Activated CD4-positive, alpha-beta memory T cell treated with anti-CD3 and anti-CD28 coated beads for 36 hours (primary cell): ENCODE measurements at regions of chr10 and their contacts with region 1.

Region 1: DNA sequence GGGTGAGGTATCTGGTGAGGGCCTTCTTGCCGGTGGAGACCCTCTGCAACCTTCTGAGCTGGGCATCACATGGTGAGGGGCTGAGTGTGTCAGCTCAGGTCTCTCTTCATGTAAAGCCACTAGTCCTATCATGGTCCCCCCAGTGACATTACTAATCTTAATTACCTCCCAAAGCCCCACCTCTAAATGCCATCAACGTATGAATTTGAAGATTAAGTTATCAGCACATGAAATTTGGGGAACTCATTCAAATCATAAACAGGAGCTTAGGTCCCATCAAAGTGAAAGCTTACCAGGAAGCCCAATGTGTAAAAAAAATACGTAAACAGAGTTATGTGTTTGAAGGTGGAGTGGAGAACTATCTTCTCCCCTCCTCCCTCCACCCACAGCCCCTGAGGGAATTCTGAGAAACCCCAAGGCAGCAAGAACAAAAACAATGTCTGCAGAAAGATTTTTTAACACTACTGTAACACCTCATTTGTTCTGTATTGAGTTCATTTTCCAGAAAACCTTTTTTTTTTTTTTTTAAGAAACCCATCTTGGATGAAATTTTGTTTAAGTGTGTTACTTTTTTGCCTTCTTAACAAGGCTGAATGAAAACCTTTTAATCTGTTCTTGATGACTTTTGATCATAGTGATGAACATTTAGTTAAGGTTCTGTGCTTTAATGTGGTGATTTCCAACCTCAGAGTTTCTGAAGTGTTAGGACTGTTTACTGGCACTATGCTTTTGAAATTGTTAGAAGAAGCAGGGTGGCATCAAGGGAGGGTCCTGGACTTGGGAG is 19.1 kb upstream of the PCGF5 start:
- DNase-seq: peak; percentile 80
- H3K4me3 Mint-ChIP-seq: peak overlapping the region; percentile 49
- H3K27ac Mint-ChIP-seq: peak overlapping the region; percentile 86
- H3K4me1 Mint-ChIP-seq: peaks cover 87% of the 10 kb centered on the region
- H3K27me3 Mint-ChIP-seq: no peaks in the 10 kb centered on the region

Region 2: GRCh38 chr10:91163269-91163868 is 38.0 kb before region 1 on chr10:
- CTCF ChIA-PET with region 1: interaction called, 6 read pairs
- POLR2A ChIA-PET with region 1: interaction called, 13 read pairs
- intact Hi-C with region 1: loop called (anchors 1 kb)
- DNase-seq: peak; percentile 79
- H3K4me3 Mint-ChIP-seq: peak overlapping the region; percentile 82
- H3K27ac Mint-ChIP-seq: peak overlapping the region; percentile 87
- H3K4me1 Mint-ChIP-seq: peaks cover 47% of the 10 kb centered on the region
- H3K27me3 Mint-ChIP-seq: no peaks in the 10 kb centered on the region

Region 3: GRCh38 chr10:91190876-91191583 is 10.4 kb before region 1 on chr10:
- CTCF ChIA-PET with region 1: no interaction called
- POLR2A ChIA-PET with region 1: interaction called, 3 read pairs
- intact Hi-C with region 1: loop called (anchors 1 kb)
- DNase-seq: no peak
- H3K4me3 Mint-ChIP-seq: no peak overlapping the region
- H3K27ac Mint-ChIP-seq: no peak overlapping the region
- H3K4me1 Mint-ChIP-seq: peaks cover 74% of the 10 kb centered on the region
- H3K27me3 Mint-ChIP-seq: no peaks in the 10 kb centered on the region

Region 4: DNA sequence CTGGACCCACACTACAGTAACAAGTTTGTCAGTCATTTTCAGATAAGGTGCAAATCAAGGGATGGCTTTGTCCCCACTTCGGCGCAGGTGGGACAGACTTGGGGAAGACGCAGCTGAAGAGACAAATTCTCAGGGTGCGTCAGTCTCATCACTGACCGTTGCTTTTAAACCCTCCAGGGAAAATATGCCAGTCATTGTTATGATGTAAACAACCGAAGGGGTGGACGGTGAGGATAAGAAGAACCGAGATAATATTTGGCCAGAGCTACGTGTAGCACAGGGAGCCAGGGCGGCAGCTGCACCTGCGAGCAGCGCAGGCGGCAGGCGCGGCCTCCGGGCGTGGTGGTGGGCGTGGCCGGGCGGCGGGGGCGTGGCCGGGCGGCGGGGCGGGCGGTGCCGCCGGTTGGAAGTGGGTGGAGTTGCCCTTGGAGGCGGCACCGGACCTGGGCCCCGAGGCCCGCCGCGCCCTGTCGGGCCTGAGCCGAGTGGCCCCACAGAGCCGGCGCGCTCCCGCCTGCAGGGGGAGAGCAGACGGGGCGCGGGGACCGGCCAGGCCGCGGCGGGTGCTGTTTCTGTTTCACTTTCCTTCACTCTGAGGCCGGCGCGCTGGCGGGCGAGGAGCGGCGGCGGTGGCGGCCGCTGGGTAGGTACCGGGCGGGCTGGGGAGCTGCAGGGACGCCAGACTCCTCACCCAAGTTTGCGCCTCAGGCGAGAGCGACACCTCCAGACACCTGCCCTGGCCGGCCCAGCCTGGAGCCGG is 19.0 kb after region 1 on chr10 and contains the start of gene PCGF5:
- CTCF ChIA-PET with region 1: interaction called, 3 read pairs
- POLR2A ChIA-PET with region 1: interaction called, 7 read pairs
- intact Hi-C with region 1: loop called (anchors 1 kb)
- DNase-seq: peak; percentile 94
- H3K4me3 Mint-ChIP-seq: peak within 1 kb of the TSS; percentile 90
- H3K27ac Mint-ChIP-seq: peak within 1 kb of the TSS; percentile 64
- H3K4me1 Mint-ChIP-seq: peaks cover 52% of the 10 kb centered on the region
- H3K27me3 Mint-ChIP-seq: no peaks in the 10 kb centered on the region
- total RNA-seq, gene PCGF5: 42.9 to 46.8 TPM

Region 5: DNA sequence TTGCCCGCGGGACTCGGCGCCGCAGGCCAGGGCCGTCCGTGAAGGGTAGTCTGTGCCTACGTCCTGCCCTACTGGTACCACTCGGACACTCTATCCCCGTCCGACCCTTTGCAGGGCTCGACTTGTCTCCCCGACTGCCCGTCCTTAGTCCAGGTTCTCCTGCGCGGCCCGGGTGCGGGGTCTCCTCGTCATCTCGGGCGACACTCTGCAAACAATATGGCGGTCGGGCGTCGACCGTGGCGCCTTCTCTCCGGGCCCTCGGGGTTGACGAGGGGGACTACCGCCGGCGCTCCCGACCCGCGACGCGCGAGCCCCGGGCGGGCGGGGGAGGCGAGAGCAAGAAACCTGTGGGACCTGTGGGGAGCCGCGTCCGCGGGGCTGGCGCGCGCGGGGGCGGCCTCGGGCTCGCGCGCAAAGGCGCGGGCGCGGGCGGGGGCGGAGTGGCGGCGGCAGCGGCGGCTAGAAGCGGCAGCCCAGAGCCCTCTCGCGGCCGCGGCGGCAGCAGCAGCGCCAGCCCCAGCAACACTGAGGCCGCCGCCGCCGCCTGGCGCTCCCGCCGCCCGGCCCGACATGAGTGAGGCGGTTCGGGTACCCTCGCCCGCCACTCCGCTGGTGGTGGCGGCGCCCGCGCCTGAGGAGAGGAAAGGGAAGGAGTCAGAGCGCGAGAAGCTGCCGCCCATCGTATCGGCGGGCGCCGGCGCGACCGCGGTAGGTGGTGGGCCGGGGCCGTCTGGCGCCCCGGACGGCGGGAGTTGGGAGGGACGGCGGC is 208.6 kb after region 1 on chr10 and contains the start of gene HECTD2:
- CTCF ChIA-PET with region 1: no interaction called
- POLR2A ChIA-PET with region 1: no interaction called
- intact Hi-C with region 1: loop called (anchors 10 kb)
- DNase-seq: peak; percentile 82
- H3K4me3 Mint-ChIP-seq: peak within 1 kb of the TSS; percentile 79
- H3K27ac Mint-ChIP-seq: peak within 1 kb of the TSS; percentile 83
- H3K4me1 Mint-ChIP-seq: peaks cover 13% of the 10 kb centered on the region
- H3K27me3 Mint-ChIP-seq: no peaks in the 10 kb centered on the region
- total RNA-seq, gene HECTD2: 4.0 to 5.5 TPM